CD4-positive, alpha-beta T cell (primary cell): ENCODE measurements at regions of chr4 and their contacts with region 1.

Region 1: GRCh38 chr4:176195184-176195978 is at the start of gene SPATA4:
- DNase-seq: peak; percentile 87 to 97 (median 92)
- ATAC-seq: peak; percentile 99
- H3K4me3 ChIP-seq: peak within 1 kb of the TSS; percentile 68
- H3K4me3 Mint-ChIP-seq: peak within 1 kb of the TSS; percentile 89
- H3K27ac ChIP-seq: no peak within 1 kb of the TSS
- H3K27ac Mint-ChIP-seq: peak within 1 kb of the TSS; percentile 93
- H3K4me1 ChIP-seq: peaks cover 11% of the 10 kb centered on the region
- H3K4me1 Mint-ChIP-seq: peaks cover 10% of the 10 kb centered on the region
- H3K27me3 ChIP-seq: peaks cover 8 to 20% of the 10 kb centered on the region in 2 experiments
- H3K27me3 Mint-ChIP-seq: peaks cover 44% of the 10 kb centered on the region
- CTCF ChIP-seq: no peak
- total RNA-seq, gene SPATA4: not detected

Region 2: DNA sequence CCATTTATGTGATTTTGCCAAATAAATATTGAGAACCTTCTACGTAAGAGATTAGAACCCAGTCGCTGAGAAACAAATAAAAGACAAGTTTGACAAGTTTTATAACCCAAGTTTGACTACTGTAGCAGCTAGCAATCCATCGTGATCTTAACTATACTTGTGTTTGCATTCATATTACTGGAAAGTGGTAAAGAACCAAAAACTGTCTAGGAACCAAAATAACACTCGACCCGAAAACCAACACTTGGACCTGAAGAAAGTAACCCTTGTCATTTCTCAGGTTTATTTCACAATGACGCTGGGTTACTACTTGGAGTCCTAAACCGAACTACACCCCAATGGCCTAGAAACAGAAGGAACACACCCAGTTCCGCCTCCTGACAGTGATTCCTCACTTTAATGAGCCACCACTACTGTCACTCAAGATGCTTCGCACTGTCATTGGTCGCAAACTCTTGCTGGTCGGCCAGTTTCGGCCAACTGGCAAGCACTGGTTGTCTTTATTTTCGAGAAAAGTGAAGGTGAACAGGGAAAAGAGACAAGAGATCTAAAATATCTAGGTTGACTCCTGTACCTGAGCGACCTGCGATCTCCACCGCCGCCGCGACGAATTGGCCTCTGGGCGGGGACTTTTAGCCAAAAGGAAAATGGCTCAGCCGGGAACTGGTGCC is 1912.4 kb before region 1 on chr4:
- CTCF ChIA-PET with region 1: no interaction called
- POLR2A ChIA-PET with region 1: interaction called, 4 read pairs
- intact Hi-C with region 1: loop called (anchors 5 to 10 kb)
- DNase-seq: peak in 13 of 14 experiments; percentile 57 to 93 (median 68)
- ATAC-seq: peak; percentile 92
- H3K4me3 ChIP-seq: peak overlapping the region; percentile 91
- H3K4me3 Mint-ChIP-seq: peak overlapping the region; percentile 95
- H3K27ac ChIP-seq: peak overlapping the region; percentile 95 to 99
- H3K27ac Mint-ChIP-seq: peak overlapping the region; percentile 99
- H3K4me1 ChIP-seq: peaks cover 11% of the 10 kb centered on the region
- H3K4me1 Mint-ChIP-seq: peaks cover 90% of the 10 kb centered on the region
- H3K27me3 ChIP-seq: no peaks in the 10 kb centered on the region
- H3K27me3 Mint-ChIP-seq: no peaks in the 10 kb centered on the region
- CTCF ChIP-seq: no peak

Region 3: DNA sequence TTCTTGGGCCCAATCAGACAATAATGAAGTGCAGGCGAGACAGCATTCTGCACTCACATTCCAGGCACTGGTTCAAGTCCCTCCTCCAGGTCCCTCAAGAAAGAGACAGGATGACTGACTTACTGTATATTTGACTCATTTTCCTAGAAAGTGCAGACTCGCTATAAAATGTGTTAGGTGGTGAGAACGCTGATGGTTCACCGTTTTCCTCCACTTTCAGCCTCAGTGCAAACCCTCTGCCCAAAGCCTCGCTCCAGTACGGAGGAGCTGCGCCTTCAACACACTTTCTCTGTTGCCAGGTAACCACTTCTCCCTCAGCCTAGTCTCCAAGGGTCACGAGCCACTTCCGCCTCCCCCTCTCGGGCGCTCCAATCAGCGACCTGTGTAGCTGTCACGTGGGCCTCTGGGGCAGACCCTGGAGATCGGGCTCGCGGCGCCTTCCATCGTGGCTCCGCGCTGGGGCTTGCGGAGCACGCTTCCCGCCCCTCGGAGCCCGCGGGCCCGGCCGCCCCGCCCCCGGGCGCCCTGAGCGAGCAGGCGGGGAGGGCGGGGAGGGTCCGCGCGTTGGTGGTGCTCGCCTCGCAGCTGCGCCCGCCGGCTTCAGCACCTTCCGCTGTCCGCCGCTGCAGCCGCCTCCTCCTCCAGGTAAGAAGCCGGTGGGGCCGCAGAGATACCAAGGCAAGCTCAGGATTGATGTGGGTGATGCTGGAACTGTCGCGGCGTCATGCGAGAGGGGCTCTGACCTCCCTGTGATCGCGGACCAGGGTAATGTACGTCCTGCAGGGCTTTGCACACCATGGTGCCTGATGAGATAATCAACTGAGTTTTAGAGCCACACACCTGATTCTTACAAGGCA is 129.7 kb before region 1 on chr4 and contains the start of gene WDR17:
- CTCF ChIA-PET with region 1: interaction called, 3 read pairs
- POLR2A ChIA-PET with region 1: no interaction called
- intact Hi-C with region 1: loop called in 1 of 2 experiments (anchors 10 kb)
- DNase-seq: peak; percentile 33 to 82 (median 60)
- ATAC-seq: peak; percentile 92
- H3K4me3 ChIP-seq: peak within 1 kb of the TSS; percentile 45
- H3K4me3 Mint-ChIP-seq: peak within 1 kb of the TSS; percentile 91
- H3K27ac ChIP-seq: no peak within 1 kb of the TSS
- H3K27ac Mint-ChIP-seq: no peak within 1 kb of the TSS
- H3K4me1 ChIP-seq: peaks cover 8% of the 10 kb centered on the region
- H3K4me1 Mint-ChIP-seq: peaks cover 15% of the 10 kb centered on the region
- H3K27me3 ChIP-seq: peaks cover 0 to 10% of the 10 kb centered on the region in 2 experiments
- H3K27me3 Mint-ChIP-seq: peaks cover 37% of the 10 kb centered on the region
- CTCF ChIP-seq: no peak
- total RNA-seq, gene WDR17: 0.47 to 0.64 TPM

Region 4: GRCh38 chr4:176207839-176208238 is 12.5 kb after region 1 on chr4:
- CTCF ChIA-PET with region 1: no interaction called
- POLR2A ChIA-PET with region 1: no interaction called
- intact Hi-C with region 1: no loop called
- DNase-seq: no peak
- ATAC-seq: no peak
- H3K4me3 ChIP-seq: no peak overlapping the region
- H3K4me3 Mint-ChIP-seq: no peak overlapping the region
- H3K27ac ChIP-seq: no peak overlapping the region
- H3K27ac Mint-ChIP-seq: no peak overlapping the region
- H3K4me1 ChIP-seq: no peaks in the 10 kb centered on the region
- H3K4me1 Mint-ChIP-seq: no peaks in the 10 kb centered on the region
- H3K27me3 ChIP-seq: peaks cover 0 to 18% of the 10 kb centered on the region in 2 experiments
- H3K27me3 Mint-ChIP-seq: peaks cover 51% of the 10 kb centered on the region
- CTCF ChIP-seq: no peak

Region 5: DNA sequence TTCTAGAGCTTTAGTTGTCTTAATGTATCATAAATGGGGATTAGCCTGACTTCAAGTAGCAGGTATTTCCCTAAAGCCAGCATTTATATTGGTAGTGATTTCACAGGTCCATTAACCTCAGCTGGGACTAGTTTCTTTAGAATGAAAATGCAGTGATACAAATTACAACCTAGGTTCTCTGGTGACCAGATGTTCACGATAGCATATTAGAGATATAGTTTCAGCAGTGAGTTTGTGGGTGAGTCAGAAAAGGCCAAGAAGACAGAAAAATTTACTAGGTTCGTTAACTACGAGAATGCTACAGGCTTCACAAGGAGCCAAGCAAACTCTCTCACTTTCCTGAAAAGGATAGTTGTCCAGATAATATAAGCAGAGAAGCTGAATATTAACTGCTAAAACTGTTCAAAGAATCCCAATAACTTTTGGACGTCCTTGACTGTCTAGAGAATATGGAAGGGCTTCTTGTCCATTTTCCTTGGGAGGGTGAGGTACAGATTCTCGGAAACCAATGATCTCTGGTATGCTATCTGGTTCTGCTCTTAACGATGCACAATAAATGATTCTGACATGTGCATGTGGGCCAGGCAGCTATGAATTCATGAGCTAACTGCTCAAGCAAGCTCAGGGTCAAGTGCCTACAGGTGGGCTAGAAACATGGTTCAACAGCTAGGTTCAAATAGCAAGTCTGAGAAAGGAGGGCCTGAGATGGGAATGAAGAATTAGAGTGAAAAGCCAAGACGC is 118.4 kb after region 1 on chr4:
- CTCF ChIA-PET with region 1: interaction called, 3 read pairs
- POLR2A ChIA-PET with region 1: interaction called, 5 read pairs
- intact Hi-C with region 1: loop called in 1 of 2 experiments (anchors 2 kb)
- DNase-seq: no peak
- ATAC-seq: no peak
- H3K4me3 ChIP-seq: no peak overlapping the region
- H3K4me3 Mint-ChIP-seq: no peak overlapping the region
- H3K27ac ChIP-seq: no peak overlapping the region
- H3K27ac Mint-ChIP-seq: no peak overlapping the region
- H3K4me1 ChIP-seq: no peaks in the 10 kb centered on the region
- H3K4me1 Mint-ChIP-seq: peaks cover 13% of the 10 kb centered on the region
- H3K27me3 ChIP-seq: no peaks in the 10 kb centered on the region
- H3K27me3 Mint-ChIP-seq: peaks cover 7% of the 10 kb centered on the region
- CTCF ChIP-seq: no peak

Region 6: GRCh38 chr4:176319704-176320339 is 124.4 kb after region 1 on chr4 and contains the start of gene SPCS3:
- CTCF ChIA-PET with region 1: interaction called, 3 read pairs
- POLR2A ChIA-PET with region 1: interaction called, 5 read pairs
- intact Hi-C with region 1: loop called (anchors 1 to 2 kb)
- DNase-seq: peak; percentile 89 to 99 (median 94)
- ATAC-seq: peak; percentile 89
- H3K4me3 ChIP-seq: peak within 1 kb of the TSS; percentile 72
- H3K4me3 Mint-ChIP-seq: peak within 1 kb of the TSS; percentile 96
- H3K27ac ChIP-seq: peak within 1 kb of the TSS; percentile 86 to 88
- H3K27ac Mint-ChIP-seq: peak within 1 kb of the TSS; percentile 90
- H3K4me1 ChIP-seq: peaks cover under 1% of the 10 kb centered on the region
- H3K4me1 Mint-ChIP-seq: peaks cover 60% of the 10 kb centered on the region
- H3K27me3 ChIP-seq: no peaks in the 10 kb centered on the region
- H3K27me3 Mint-ChIP-seq: no peaks in the 10 kb centered on the region
- CTCF ChIP-seq: no peak
- total RNA-seq, gene SPCS3: 149 TPM

Region 7: DNA sequence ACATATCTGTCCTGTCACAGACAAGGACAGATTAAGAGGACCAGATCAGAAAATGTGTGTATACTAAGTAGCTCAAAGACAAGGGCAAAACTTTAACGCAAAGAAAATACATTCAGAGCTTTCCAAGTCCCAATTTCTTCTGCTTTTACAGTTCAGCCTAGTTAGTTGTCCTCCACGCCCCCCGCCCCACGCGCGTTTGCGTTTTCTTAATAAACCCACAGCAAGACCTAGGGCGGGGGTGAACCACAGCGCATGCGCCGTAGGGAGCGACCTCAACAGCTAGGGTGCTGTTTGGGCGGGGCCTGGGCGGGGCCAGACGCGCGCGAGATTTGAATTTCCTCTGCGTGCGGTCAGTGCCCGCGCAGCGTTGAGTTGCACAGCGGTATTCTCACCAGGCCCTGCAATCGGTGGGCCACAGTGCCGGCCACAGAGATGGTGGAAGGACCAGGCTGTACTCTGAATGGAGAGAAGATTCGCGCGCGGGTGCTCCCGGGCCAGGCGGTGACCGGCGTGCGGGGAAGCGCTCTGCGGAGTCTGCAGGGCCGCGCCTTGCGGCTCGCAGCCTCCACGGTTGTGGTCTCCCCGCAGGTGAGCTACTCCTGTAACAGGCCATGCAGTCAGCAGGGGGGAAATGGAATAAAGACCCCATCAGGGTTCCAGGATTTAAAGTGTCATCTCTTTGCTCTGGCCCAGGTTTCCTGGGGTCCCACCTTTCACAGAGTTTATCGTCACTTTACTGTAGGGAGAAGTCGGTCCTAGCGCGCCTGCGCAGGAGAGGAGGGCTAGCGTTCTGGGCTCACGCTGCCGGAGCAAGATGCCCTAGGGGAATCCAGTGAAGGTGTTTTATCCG is 1114.4 kb after region 1 on chr4 and contains the start of gene NEIL3:
- CTCF ChIA-PET with region 1: no interaction called
- POLR2A ChIA-PET with region 1: no interaction called
- intact Hi-C with region 1: loop called in 1 of 2 experiments (anchors 10 kb)
- DNase-seq: peak; percentile 91 to 98 (median 95)
- ATAC-seq: peak; percentile 81
- H3K4me3 ChIP-seq: peak within 1 kb of the TSS; percentile 72
- H3K4me3 Mint-ChIP-seq: peak within 1 kb of the TSS; percentile 88
- H3K27ac ChIP-seq: no peak within 1 kb of the TSS
- H3K27ac Mint-ChIP-seq: peak within 1 kb of the TSS; percentile 78
- H3K4me1 ChIP-seq: peaks cover 5% of the 10 kb centered on the region
- H3K4me1 Mint-ChIP-seq: peaks cover 37% of the 10 kb centered on the region
- H3K27me3 ChIP-seq: no peaks in the 10 kb centered on the region
- H3K27me3 Mint-ChIP-seq: no peaks in the 10 kb centered on the region
- CTCF ChIP-seq: no peak
- total RNA-seq, gene NEIL3: 0.22 to 0.25 TPM

Region 8: GRCh38 chr4:177441803-177442622 is 1246.6 kb after region 1 on chr4 and contains the start of gene AGA:
- CTCF ChIA-PET with region 1: no interaction called
- POLR2A ChIA-PET with region 1: no interaction called
- intact Hi-C with region 1: loop called in 1 of 2 experiments (anchors 10 kb)
- DNase-seq: peak; percentile 87 to 98 (median 94)
- ATAC-seq: peak; percentile 89
- H3K4me3 ChIP-seq: peak within 1 kb of the TSS; percentile 65
- H3K4me3 Mint-ChIP-seq: peak within 1 kb of the TSS; percentile 89
- H3K27ac ChIP-seq: peak within 1 kb of the TSS; percentile 89 to 90
- H3K27ac Mint-ChIP-seq: peak within 1 kb of the TSS; percentile 91
- H3K4me1 ChIP-seq: peaks cover 17% of the 10 kb centered on the region
- H3K4me1 Mint-ChIP-seq: peaks cover 46% of the 10 kb centered on the region
- H3K27me3 ChIP-seq: no peaks in the 10 kb centered on the region
- H3K27me3 Mint-ChIP-seq: no peaks in the 10 kb centered on the region
- CTCF ChIP-seq: no peak
- total RNA-seq, gene AGA: 14.6 to 15.4 TPM